Heart right ventricle (tissue), 16 donors: ENCODE measurements at regions of chr10 and their contacts with region 1.

Region 1: DNA sequence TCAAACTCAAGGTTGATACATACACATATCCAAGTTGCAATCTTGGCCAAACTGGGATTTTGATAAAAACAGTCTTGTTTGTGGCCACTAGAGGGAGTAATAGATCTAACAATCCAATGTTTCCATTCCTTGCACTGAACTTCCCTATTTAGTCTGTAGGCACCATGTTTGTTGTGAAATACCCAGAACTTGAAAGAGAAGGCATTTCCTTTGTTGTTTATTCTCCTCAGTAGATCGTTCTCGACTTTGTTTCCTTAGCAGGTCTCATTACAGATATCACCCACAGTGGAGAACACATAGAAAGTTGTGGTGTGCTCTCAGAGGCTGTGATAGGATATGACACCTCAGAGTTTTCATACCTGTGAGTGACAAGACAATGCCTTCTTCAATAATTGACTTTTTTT is 70.3 kb upstream of the MXI1 start:
- DNase-seq: peak in 1 of 2 donors; percentile 32
- ATAC-seq: peak; percentile 64 to 86 (median 80)
- H3K4me3 ChIP-seq: peak overlapping the region in 1 of 10 donors; percentile 21
- H3K27ac ChIP-seq: peak overlapping the region in 7 of 10 donors; percentile 10 to 83 (median 49)
- H3K4me1 ChIP-seq: peaks cover 0 to 41% (median 30%) of the 10 kb centered on the region in 9 donors
- H3K27me3 ChIP-seq: no peaks in the 10 kb centered on the region
- CTCF ChIP-seq: peak; percentile 67 to 86 (median 77)

Region 2: GRCh38 chr10:110168601-110169481 is 31.7 kb after region 1 on chr10:
- intact Hi-C with region 1: loop called in 1 of 10 experiments (anchors 2 kb)
- DNase-seq: peak in 1 of 2 donors; percentile 27
- ATAC-seq: peak; percentile 27 to 79 (median 70)
- H3K4me3 ChIP-seq: peak overlapping the region in 3 of 10 donors; percentile 15 to 17 (median 16)
- H3K27ac ChIP-seq: peak overlapping the region in 8 of 10 donors; percentile 6 to 83 (median 42)
- H3K4me1 ChIP-seq: peaks cover 7 to 45% (median 25%) of the 10 kb centered on the region in 9 donors
- H3K27me3 ChIP-seq: peaks cover 4 to 55% (median 14%) of the 10 kb centered on the region in 7 donors
- CTCF ChIP-seq: no peak

Region 3: DNA sequence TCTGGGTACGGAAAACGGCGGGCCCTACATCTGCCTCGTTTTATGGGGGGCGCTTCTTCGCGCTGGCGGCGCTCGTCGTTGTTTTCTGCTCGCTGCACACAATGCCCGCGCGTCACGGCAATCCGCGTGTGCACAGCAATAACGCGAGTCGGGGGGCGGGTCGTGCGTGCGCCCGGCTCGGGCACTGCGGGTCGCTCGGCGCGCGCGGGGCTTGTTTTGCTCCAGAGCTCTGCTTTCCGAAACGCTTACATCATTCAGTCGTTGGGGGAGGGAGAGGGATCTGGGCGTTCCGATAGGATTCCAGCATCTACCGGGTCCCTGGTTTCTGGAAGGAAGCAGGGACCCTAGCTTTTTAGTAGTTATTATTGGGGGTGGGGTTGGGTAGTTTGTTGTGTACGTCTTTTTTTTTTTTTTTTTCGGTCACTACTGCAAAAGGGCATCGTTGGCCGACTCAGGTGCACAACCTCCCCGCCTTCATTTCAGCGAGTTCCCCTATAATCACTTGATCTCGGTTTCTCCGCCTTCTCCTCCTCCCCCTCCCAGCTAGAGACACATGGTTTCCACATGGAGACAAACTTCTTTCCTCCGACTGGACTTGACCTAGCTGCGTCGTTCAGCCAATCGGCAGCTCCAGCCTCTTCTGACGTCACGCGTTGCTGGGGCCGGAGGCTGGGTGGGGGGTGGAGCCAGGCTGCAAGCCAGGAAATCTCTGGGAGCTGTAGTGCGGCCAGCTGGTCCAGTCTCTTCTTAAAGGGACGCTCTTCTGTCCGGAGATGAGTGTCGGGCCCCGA is 73.7 kb after region 1 on chr10:
- intact Hi-C with region 1: loop called in 9 of 10 experiments (anchors 1 to 10 kb)
- DNase-seq: peak; percentile 97
- ATAC-seq: peak; percentile 89 to 94 (median 91)
- H3K4me3 ChIP-seq: peak overlapping the region; percentile 61 to 92 (median 82)
- H3K27ac ChIP-seq: peak overlapping the region; percentile 94 to 100 (median 98)
- H3K4me1 ChIP-seq: peaks cover 12 to 57% (median 52%) of the 10 kb centered on the region in 9 donors
- H3K27me3 ChIP-seq: no peaks in the 10 kb centered on the region
- CTCF ChIP-seq: no peak

Region 4: GRCh38 chr10:110225756-110226542 is 88.8 kb after region 1 on chr10:
- intact Hi-C with region 1: loop called in 8 of 10 experiments (anchors 1 to 5 kb)
- DNase-seq: peak; percentile 92 to 93
- ATAC-seq: peak; percentile 67 to 85 (median 72)
- H3K4me3 ChIP-seq: peak overlapping the region; percentile 64 to 99 (median 81)
- H3K27ac ChIP-seq: peak overlapping the region; percentile 85 to 93 (median 88)
- H3K4me1 ChIP-seq: peaks cover 7 to 60% (median 45%) of the 10 kb centered on the region in 9 donors
- H3K27me3 ChIP-seq: no peaks in the 10 kb centered on the region
- CTCF ChIP-seq: peak; percentile 54 to 85 (median 71)

Region 5: DNA sequence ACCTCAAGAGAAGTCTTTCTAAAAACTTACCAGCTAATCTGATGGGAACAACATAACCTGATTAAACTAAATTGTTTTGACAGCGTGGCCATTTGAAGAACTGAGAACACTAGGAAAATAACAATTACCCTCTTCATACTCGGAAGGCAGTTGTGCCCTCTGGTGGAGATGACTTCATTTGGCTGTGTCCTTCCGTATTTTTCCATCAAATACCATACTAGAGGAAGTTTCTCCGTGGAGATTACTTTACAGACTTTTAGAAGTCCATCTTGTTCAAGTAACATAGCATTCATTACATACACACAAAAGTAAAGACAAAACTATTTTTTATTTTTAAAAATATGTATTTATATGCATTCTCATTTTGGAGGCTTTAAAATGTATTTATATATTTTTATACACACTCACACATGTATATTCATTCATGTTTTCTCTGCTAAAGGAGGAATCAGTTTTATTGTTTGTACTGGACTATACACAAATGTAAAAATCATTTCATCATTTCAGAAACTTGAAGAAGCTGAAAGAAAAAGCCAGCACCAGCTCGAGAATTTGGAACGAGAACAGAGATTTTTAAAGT is 142.4 kb after region 1 on chr10:
- intact Hi-C with region 1: loop called (anchors 1 to 5 kb)
- DNase-seq: peak in 1 of 2 donors; percentile 71
- ATAC-seq: peak; percentile 46 to 84 (median 76)
- H3K4me3 ChIP-seq: peak overlapping the region in 1 of 10 donors; percentile 26
- H3K27ac ChIP-seq: peak overlapping the region in 6 of 10 donors; percentile 5 to 57 (median 41)
- H3K4me1 ChIP-seq: peaks cover 2 to 55% (median 30%) of the 10 kb centered on the region in 9 donors
- H3K27me3 ChIP-seq: no peaks in the 10 kb centered on the region
- CTCF ChIP-seq: peak; percentile 69 to 89 (median 78)

Region 6: GRCh38 chr10:110547139-110547761 is 410.1 kb after region 1 on chr10:
- intact Hi-C with region 1: loop called in 2 of 10 experiments (anchors 10 kb)
- DNase-seq: peak in 1 of 2 donors; percentile 12
- ATAC-seq: peak in 6 of 8 donors; percentile 66 to 80 (median 76)
- H3K4me3 ChIP-seq: no peak overlapping the region
- H3K27ac ChIP-seq: no peak overlapping the region
- H3K4me1 ChIP-seq: peaks cover 0 to 14% (median 0%) of the 10 kb centered on the region in 9 donors
- H3K27me3 ChIP-seq: peaks cover 0 to 15% (median 0%) of the 10 kb centered on the region in 7 donors
- CTCF ChIP-seq: peak; percentile 72 to 88 (median 81)